ENCODE measurements at regions of chr13 and their contacts with region 1.

Region 1: GRCh38 chr13:44879463-44880058 is 109.7 kb downstream of the NUFIP1 start:
- DNase-seq: peak; percentile 45
- CTCF ChIP-seq: peak; percentile 63

Region 2: GRCh38 chr13:44470638-44471562 is 408.7 kb before region 1 on chr13:
- in situ Hi-C with region 1: loop called (anchors 10 kb)
- DNase-seq: no peak
- CTCF ChIP-seq: peak; percentile 47